Heart right ventricle (tissue), 16 donors: ENCODE measurements at regions of chr19 and their contacts with region 1.

Region 1: DNA sequence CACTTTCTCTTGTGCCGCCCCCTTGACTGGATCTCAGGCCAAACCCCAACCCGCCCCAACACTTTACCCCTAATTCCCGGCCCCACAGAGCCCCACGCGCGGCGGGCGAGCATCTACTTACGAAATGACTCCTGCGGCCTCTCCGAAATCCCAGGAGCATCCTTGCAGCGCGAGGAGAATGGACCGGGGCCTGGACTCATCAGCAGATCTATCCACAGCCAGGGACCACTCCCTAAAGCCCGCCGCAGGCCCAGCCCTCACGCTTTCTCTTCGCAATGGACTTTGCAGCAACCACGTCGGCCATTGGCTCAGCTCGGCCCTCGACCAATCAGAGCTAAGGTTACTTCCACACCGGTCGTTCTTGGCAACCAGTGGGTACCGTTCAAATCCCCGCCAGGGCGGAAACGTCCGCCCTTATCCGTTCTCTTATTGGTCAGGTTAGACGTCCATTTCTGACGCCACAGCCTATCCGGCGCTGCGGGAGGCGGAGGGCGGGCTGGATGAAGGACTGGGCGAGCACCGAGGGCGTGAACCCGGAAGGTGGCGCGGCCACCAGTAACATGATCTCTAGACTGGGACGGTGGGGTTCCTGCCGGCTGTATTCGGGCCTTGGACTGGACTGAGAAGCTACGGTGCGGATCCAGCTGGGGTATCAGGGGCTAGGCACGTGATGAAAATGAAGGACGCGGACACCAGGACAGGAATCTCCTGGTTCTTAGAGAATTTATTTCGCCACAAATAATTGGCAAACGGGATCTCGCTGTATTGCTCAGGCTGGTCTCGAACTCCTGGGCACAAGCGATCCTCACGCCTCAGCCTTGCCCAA is at the starts of genes CEP89 and FAAP24:
- DNase-seq: peak; percentile 96 to 98
- ATAC-seq: peak; percentile 99 to 100 (median 99)
- H3K4me3 ChIP-seq: peak within 1 kb of the TSS; percentile 57 to 85 (median 74)
- H3K27ac ChIP-seq: peak within 1 kb of the TSS in 9 of 10 donors; percentile 42 to 91 (median 61)
- H3K4me1 ChIP-seq: peaks cover 0 to 23% (median 14%) of the 10 kb centered on the region in 9 donors
- H3K27me3 ChIP-seq: no peaks in the 10 kb centered on the region
- CTCF ChIP-seq: no peak
- total RNA-seq, gene CEP89: 7.8 to 13.9 (median 10.4) TPM
- total RNA-seq, gene FAAP24: 0.40 to 1.3 (median 0.58) TPM

Region 2: DNA sequence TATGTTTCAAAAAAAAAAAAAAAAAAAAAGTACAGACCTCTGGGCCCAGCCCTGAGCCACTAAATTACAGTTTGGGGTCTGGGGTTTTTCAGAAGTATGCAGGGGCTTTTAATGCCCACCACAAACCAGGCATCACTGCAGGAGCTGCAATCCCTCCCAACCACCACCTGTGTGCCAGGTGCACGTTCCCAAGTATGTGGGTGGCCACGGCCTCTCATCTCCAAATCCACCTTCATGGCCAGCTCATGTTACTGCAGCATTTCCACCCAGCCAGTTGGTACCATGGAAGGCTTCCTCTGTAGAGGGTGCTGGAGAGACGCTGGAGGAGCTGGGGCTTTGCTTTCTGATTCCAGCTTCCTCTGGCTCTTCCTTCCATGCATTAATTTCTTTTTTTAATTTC is 26.7 kb before region 1 on chr19:
- intact Hi-C with region 1: no loop called
- DNase-seq: no peak
- ATAC-seq: no peak
- H3K4me3 ChIP-seq: no peak overlapping the region
- H3K27ac ChIP-seq: no peak overlapping the region
- H3K4me1 ChIP-seq: no peaks in the 10 kb centered on the region
- H3K27me3 ChIP-seq: no peaks in the 10 kb centered on the region
- CTCF ChIP-seq: no peak

Region 3: GRCh38 chr19:32988724-32989123 is 16.8 kb after region 1 on chr19:
- intact Hi-C with region 1: no loop called
- DNase-seq: no peak
- ATAC-seq: no peak
- H3K4me3 ChIP-seq: no peak overlapping the region
- H3K27ac ChIP-seq: no peak overlapping the region
- H3K4me1 ChIP-seq: no peaks in the 10 kb centered on the region
- H3K27me3 ChIP-seq: no peaks in the 10 kb centered on the region
- CTCF ChIP-seq: no peak

Region 4: GRCh38 chr19:33005420-33005819 is 33.5 kb after region 1 on chr19:
- intact Hi-C with region 1: no loop called
- DNase-seq: no peak
- ATAC-seq: no peak
- H3K4me3 ChIP-seq: no peak overlapping the region
- H3K27ac ChIP-seq: no peak overlapping the region
- H3K4me1 ChIP-seq: no peaks in the 10 kb centered on the region
- H3K27me3 ChIP-seq: no peaks in the 10 kb centered on the region
- CTCF ChIP-seq: no peak

Region 5: GRCh38 chr19:33080761-33081681 is 109.1 kb after region 1 on chr19 and contains the start of gene GPATCH1:
- intact Hi-C with region 1: loop called in 3 of 10 experiments (anchors 10 kb)
- DNase-seq: peak; percentile 90 to 91
- ATAC-seq: peak; percentile 93 to 98 (median 97)
- H3K4me3 ChIP-seq: peak within 1 kb of the TSS; percentile 59 to 100 (median 90)
- H3K27ac ChIP-seq: peak within 1 kb of the TSS in 9 of 10 donors; percentile 64 to 87 (median 76)
- H3K4me1 ChIP-seq: peaks cover 4 to 27% (median 13%) of the 10 kb centered on the region in 9 donors
- H3K27me3 ChIP-seq: no peaks in the 10 kb centered on the region
- CTCF ChIP-seq: peak in 1 of 9 donors; percentile 2
- total RNA-seq, gene GPATCH1: 4.5 to 7.4 (median 5.5) TPM

Region 6: DNA sequence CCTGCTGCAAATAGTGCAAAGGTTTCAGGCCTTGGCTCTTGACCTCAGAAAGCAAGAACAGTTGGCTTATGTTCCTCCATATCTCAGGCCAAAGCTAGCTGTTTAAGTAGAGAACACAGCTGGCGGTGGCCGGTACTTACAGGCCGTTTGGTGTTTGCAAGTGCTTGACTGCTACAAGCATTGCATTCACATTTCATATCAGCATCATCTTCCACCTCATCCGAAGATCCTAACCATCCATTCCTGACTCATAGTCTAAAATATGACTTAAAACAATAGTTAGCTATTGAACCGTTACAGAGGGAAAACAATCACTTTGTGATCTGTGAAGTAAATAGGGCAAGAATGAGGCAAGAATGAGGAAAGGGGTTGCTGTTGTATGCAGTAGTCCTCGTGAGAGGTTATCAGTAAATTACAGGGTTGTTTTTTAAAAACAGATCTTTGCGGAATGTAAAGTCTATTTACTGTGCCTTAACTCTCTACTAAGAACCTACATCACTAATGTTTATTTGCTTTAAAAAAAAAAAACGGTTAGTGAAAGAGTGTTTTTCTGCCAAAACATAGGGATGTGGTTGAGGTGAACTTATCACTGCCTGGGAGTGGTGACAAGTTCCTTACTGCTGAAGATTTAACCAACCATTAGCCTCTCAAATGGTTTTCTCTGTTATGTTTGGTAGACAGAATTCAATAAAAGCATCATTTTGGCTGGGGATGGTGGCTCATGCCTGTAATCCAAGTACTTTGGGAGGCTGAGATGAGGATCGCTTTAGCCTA is 138.4 kb after region 1 on chr19:
- intact Hi-C with region 1: loop called in 1 of 10 experiments (anchors 10 kb)
- DNase-seq: no peak
- ATAC-seq: no peak
- H3K4me3 ChIP-seq: no peak overlapping the region
- H3K27ac ChIP-seq: no peak overlapping the region
- H3K4me1 ChIP-seq: no peaks in the 10 kb centered on the region
- H3K27me3 ChIP-seq: no peaks in the 10 kb centered on the region
- CTCF ChIP-seq: no peak

Region 7: GRCh38 chr19:33125929-33126388 is 154.0 kb after region 1 on chr19:
- intact Hi-C with region 1: loop called in 3 of 10 experiments (anchors 5 to 10 kb)
- DNase-seq: peak in 1 of 2 donors; percentile 32
- ATAC-seq: peak in 6 of 8 donors; percentile 75 to 87 (median 81)
- H3K4me3 ChIP-seq: no peak overlapping the region
- H3K27ac ChIP-seq: no peak overlapping the region
- H3K4me1 ChIP-seq: peaks cover 0 to 7% (median 0%) of the 10 kb centered on the region in 9 donors
- H3K27me3 ChIP-seq: no peaks in the 10 kb centered on the region
- CTCF ChIP-seq: peak; percentile 75 to 89 (median 83)